ENCODE measurements at regions of chr3 and their contacts with region 1.

Region 1: DNA sequence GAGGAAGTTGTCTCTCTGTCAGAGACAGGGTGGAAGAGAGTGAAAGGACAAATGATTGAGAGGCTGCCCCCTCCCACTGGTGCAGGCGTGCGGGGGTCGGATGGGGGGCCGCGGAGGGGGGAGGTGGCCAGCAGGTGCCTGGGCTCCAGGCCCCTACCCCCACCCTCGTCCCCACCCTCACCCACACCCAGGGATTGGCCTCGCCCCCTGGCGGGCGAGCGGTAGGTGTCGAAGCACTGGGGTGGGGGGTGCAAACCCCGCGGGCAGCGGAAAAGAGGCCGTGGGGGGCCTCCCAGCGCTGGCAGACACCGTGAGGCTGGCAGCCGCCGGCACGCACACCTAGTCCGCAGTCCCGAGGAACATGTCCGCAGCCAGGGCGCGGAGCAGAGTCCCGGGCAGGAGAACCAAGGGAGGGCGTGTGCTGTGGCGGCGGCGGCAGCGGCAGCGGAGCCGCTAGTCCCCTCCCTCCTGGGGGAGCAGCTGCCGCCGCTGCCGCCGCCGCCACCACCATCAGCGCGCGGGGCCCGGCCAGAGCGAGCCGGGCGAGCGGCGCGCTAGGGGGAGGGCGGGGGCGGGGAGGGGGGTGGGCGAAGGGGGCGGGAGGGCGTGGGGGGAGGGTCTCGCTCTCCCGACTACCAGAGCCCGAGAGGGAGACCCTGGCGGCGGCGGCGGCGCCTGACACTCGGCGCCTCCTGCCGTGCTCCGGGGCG is at the start of gene KAT2B:
- DNase-seq: peak; percentile 75 to 87 (median 84)
- ATAC-seq: peak; percentile 87
- H3K4me3 ChIP-seq: peak within 1 kb of the TSS; percentile 91
- H3K4me3 Mint-ChIP-seq: peak within 1 kb of the TSS; percentile 92 to 100 (median 96)
- H3K27ac ChIP-seq: peak within 1 kb of the TSS; percentile 79
- H3K27ac Mint-ChIP-seq: peak within 1 kb of the TSS; percentile 94 to 98 (median 97)
- H3K4me1 ChIP-seq: peaks cover 40 to 41% of the 10 kb centered on the region in 2 donors
- H3K4me1 Mint-ChIP-seq: peaks cover 41 to 57% (median 55%) of the 10 kb centered on the region in 7 donors
- H3K27me3 ChIP-seq: no peaks in the 10 kb centered on the region
- H3K27me3 Mint-ChIP-seq: no peaks in the 10 kb centered on the region
- total RNA-seq, gene KAT2B: 58.5 to 127 (median 62.5) TPM

Region 2: GRCh38 chr3:18424729-18425640 is 1614.9 kb before region 1 on chr3 and contains the start of gene SATB1:
- CTCF ChIA-PET with region 1: no interaction called
- POLR2A ChIA-PET with region 1: no interaction called
- intact Hi-C with region 1: loop called (anchors 10 kb)
- DNase-seq: peak; percentile 55 to 72 (median 67)
- ATAC-seq: peak; percentile 62
- H3K4me3 ChIP-seq: peak within 1 kb of the TSS; percentile 72
- H3K4me3 Mint-ChIP-seq: peak within 1 kb of the TSS; percentile 91 to 100 (median 98)
- H3K27ac ChIP-seq: peak within 1 kb of the TSS; percentile 97
- H3K27ac Mint-ChIP-seq: peak within 1 kb of the TSS; percentile 87 to 99 (median 98)
- H3K4me1 ChIP-seq: peaks cover 8 to 21% of the 10 kb centered on the region in 2 donors
- H3K4me1 Mint-ChIP-seq: peaks cover 41 to 72% (median 62%) of the 10 kb centered on the region in 7 donors
- H3K27me3 ChIP-seq: no peaks in the 10 kb centered on the region
- H3K27me3 Mint-ChIP-seq: peaks cover 0 to 2% (median 0%) of the 10 kb centered on the region in 5 donors
- total RNA-seq, gene SATB1: 258 to 482 (median 451) TPM

Region 3: DNA sequence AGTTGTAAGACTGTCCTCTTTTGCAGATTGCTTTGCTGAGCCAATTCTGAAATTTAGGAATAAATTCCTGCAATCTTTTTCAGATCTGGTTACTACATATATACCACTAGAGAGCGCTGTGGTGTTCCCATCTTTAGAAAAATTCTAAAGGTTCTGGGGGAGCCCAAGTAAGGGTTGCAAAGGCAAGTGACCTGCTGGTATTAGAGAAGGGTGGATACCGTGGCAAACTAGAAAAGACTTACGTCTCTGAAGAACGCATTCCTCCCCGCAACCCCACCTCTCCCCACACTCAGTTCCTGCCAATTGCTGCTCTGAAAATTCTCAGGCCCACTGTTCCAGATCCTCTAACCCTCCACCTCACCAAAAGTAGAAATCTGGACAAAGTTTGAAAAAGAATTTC is 154.5 kb before region 1 on chr3:
- CTCF ChIA-PET with region 1: no interaction called
- POLR2A ChIA-PET with region 1: no interaction called
- intact Hi-C with region 1: loop called (anchors 1 kb)
- DNase-seq: peak in 6 of 9 donors; percentile 14 to 32 (median 18)
- ATAC-seq: peak; percentile 72
- H3K4me3 ChIP-seq: no peak overlapping the region
- H3K4me3 Mint-ChIP-seq: no peak overlapping the region
- H3K27ac ChIP-seq: no peak overlapping the region
- H3K27ac Mint-ChIP-seq: no peak overlapping the region
- H3K4me1 ChIP-seq: no peaks in the 10 kb centered on the region
- H3K4me1 Mint-ChIP-seq: peaks cover 0 to 7% (median 0%) of the 10 kb centered on the region in 7 donors
- H3K27me3 ChIP-seq: no peaks in the 10 kb centered on the region
- H3K27me3 Mint-ChIP-seq: peaks cover 0 to 11% (median 0%) of the 10 kb centered on the region in 5 donors

Region 4: DNA sequence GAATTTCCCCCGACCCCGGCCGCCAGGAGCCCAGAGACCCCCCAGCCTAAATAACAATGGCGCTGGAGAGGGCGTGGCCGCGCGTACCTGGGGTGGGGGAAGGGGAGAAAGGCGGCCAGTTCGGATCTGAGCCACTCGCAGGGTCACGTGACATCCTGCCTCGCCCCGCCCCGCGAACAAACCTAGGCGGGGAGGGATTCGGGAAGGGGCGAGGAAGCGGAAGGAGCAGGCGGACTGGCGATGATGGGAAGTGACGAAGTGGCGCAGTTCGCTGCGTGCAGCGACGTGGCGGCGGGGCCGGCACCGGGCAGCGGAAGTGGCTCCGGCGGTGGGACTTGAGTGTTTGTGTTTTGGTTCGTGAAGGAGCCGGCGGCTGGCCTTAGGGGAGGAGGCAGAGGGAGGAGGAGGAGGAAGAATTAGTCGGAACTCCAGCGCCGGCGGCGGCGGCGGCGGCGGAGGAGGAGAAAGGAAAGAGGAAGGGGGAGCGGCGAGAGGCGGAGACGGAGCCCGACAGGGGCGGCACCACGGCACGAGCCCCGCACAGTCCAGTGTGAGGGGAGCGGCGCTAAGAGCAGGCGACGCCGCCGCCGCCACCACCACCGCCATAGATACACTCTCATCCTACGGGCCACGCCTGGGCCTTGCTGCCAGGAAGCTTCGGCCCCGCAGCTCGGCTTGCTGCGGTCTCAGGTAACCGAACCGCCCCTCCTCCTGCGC is 92.9 kb before region 1 on chr3 and contains the start of gene RAB5A:
- CTCF ChIA-PET with region 1: interaction called, 3 read pairs
- POLR2A ChIA-PET with region 1: interaction called, 7 read pairs
- intact Hi-C with region 1: loop called (anchors 1 kb)
- DNase-seq: peak; percentile 87 to 98 (median 96)
- ATAC-seq: peak; percentile 89
- H3K4me3 ChIP-seq: peak within 1 kb of the TSS; percentile 88
- H3K4me3 Mint-ChIP-seq: peak within 1 kb of the TSS; percentile 91 to 99 (median 97)
- H3K27ac ChIP-seq: peak within 1 kb of the TSS; percentile 94
- H3K27ac Mint-ChIP-seq: peak within 1 kb of the TSS; percentile 98 to 100 (median 99)
- H3K4me1 ChIP-seq: peaks cover 19 to 27% of the 10 kb centered on the region in 2 donors
- H3K4me1 Mint-ChIP-seq: peaks cover 25 to 68% (median 59%) of the 10 kb centered on the region in 7 donors
- H3K27me3 ChIP-seq: no peaks in the 10 kb centered on the region
- H3K27me3 Mint-ChIP-seq: peaks cover 0 to 3% (median 0%) of the 10 kb centered on the region in 5 donors
- total RNA-seq, gene RAB5A: 50.3 to 92.2 (median 58.9) TPM

Region 5: GRCh38 chr3:20054549-20054987 is 14.6 kb after region 1 on chr3:
- CTCF ChIA-PET with region 1: interaction called, 4 read pairs
- POLR2A ChIA-PET with region 1: interaction called, 4 read pairs
- intact Hi-C with region 1: loop called in 1 of 2 experiments (anchors 2 kb)
- DNase-seq: peak in 2 of 9 donors; percentile 21 to 46
- ATAC-seq: peak; percentile 90
- H3K4me3 ChIP-seq: no peak overlapping the region
- H3K4me3 Mint-ChIP-seq: no peak overlapping the region
- H3K27ac ChIP-seq: no peak overlapping the region
- H3K27ac Mint-ChIP-seq: peak overlapping the region in 1 of 9 donors; percentile 27
- H3K4me1 ChIP-seq: peaks cover 25 to 44% of the 10 kb centered on the region in 2 donors
- H3K4me1 Mint-ChIP-seq: peaks cover 24 to 42% (median 40%) of the 10 kb centered on the region in 7 donors
- H3K27me3 ChIP-seq: no peaks in the 10 kb centered on the region
- H3K27me3 Mint-ChIP-seq: no peaks in the 10 kb centered on the region

Region 6: DNA sequence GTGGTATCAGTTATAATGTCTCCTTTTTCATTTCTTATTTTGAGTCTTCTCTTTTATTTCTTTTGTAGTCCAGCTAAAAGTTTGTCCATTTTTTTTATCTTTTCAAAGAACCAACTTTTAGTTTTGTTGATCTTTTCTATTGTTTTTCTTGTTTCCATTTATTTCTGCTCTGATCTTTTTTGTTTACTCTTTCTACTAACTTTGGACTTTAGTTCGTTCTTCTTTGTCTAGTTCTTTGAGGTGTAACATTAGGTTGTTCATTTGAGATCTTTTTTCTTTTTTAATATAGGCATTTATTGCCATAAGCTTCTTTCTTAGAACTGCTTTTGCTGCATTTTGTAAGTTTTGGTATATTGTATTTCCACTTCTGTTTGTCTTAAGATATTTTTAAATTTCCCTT is 51.4 kb after region 1 on chr3:
- CTCF ChIA-PET with region 1: no interaction called
- POLR2A ChIA-PET with region 1: no interaction called
- intact Hi-C with region 1: no loop called
- DNase-seq: no peak
- ATAC-seq: no peak
- H3K4me3 ChIP-seq: no peak overlapping the region
- H3K4me3 Mint-ChIP-seq: no peak overlapping the region
- H3K27ac ChIP-seq: no peak overlapping the region
- H3K27ac Mint-ChIP-seq: peak overlapping the region in 2 of 9 donors; percentile 22 to 36
- H3K4me1 ChIP-seq: no peaks in the 10 kb centered on the region
- H3K4me1 Mint-ChIP-seq: peaks cover 12 to 27% (median 22%) of the 10 kb centered on the region in 7 donors
- H3K27me3 ChIP-seq: no peaks in the 10 kb centered on the region
- H3K27me3 Mint-ChIP-seq: no peaks in the 10 kb centered on the region

Region 7: DNA sequence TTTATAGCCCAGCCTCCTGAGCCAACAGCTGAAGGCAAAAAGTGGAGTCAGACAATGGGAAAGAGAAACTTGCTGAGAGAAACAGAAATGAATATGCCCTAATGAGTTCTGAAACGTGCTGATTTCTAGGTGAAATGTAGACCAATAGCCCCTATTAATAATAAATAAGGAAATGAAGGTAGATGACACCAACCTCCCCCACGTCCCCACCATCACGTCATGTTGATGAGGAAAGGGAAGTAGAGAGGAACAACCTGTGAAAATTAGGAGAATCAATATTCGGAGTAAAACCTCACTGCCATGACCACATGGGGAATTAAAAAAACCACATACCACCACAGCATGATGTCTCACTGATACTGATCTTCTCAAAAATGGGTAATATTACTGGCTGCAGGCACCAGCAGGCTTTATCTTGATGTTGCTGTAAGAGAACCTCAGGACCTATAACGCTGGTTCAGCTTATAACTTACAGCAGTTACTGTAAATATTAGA is 64.3 kb after region 1 on chr3:
- CTCF ChIA-PET with region 1: no interaction called
- POLR2A ChIA-PET with region 1: no interaction called
- intact Hi-C with region 1: loop called (anchors 1 to 5 kb)
- DNase-seq: peak in 1 of 9 donors; percentile 35
- ATAC-seq: peak; percentile 87
- H3K4me3 ChIP-seq: no peak overlapping the region
- H3K4me3 Mint-ChIP-seq: peak overlapping the region in 5 of 10 donors; percentile 19 to 63 (median 27)
- H3K27ac ChIP-seq: peak overlapping the region; percentile 13
- H3K27ac Mint-ChIP-seq: peak overlapping the region; percentile 8 to 90 (median 54)
- H3K4me1 ChIP-seq: peaks cover 8 to 52% of the 10 kb centered on the region in 2 donors
- H3K4me1 Mint-ChIP-seq: peaks cover 6 to 72% (median 33%) of the 10 kb centered on the region in 7 donors
- H3K27me3 ChIP-seq: no peaks in the 10 kb centered on the region
- H3K27me3 Mint-ChIP-seq: no peaks in the 10 kb centered on the region